ENCODE measurements at regions of chr1 and their contacts with region 1.

Region 1: DNA sequence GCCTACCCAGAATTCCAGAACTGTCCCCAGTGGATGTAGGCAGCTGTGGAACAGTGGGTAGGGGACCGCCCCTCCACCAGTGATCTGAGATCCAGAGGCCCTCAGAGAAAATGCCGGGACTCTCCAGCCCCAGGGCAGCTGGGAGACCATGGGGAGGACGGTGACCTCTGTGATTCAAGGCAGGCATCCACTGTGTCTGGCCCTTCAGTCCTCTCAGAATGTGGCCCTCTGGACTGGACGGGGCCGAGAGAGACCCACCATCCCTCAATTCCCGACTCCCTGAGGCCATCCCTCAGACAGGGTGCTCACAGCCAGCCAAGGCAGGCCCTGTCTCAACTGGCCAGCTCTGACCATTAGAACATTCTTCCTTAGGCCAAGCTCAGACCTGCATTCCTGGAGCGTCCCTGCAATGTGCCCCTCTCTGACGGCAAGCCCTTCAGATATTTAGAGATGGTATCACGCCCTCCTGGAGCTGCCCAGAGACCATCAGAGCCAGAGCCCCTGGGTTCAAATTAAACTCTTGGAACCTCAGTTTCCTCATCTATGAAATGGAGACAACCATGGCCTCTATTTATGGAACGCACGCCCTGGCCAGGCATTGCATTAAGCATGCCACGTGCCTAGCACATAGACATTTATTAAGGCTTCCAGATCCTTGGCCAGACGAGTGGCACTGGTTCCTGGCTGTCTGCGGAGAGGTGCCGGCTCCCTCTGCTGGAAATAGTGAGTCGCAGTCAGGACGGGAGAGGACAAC is 9.6 kb upstream of the EPS8L3 start:
- DNase-seq: peak; percentile 82 to 89 (median 83)
- ATAC-seq: peak; percentile 72 to 88 (median 86)
- H3K4me3 ChIP-seq: no peak overlapping the region
- H3K27ac ChIP-seq: no peak overlapping the region
- H3K4me1 ChIP-seq: peaks cover 0 to 16% (median 8%) of the 10 kb centered on the region in 12 donors
- H3K27me3 ChIP-seq: no peaks in the 10 kb centered on the region
- CTCF ChIP-seq: peak; percentile 78 to 90 (median 86)
- POLR2A ChIP-seq: no peak

Region 2: GRCh38 chr1:109548321-109549267 is 224.7 kb before region 1 on chr1 and contains the start of gene GNAI3:
- intact Hi-C with region 1: loop called (anchors 1 to 5 kb)
- DNase-seq: peak; percentile 95 to 97 (median 97)
- ATAC-seq: peak; percentile 98 to 99 (median 98)
- H3K4me3 ChIP-seq: peak within 1 kb of the TSS; percentile 61 to 98 (median 90)
- H3K27ac ChIP-seq: peak within 1 kb of the TSS; percentile 85 to 99 (median 94)
- H3K4me1 ChIP-seq: peaks cover 0 to 51% (median 34%) of the 10 kb centered on the region in 12 donors
- H3K27me3 ChIP-seq: no peaks in the 10 kb centered on the region
- CTCF ChIP-seq: no peak
- POLR2A ChIP-seq: peak; percentile 71 to 97
- total RNA-seq, gene GNAI3: 1.5 to 5.4 (median 2.5) TPM

Region 3: GRCh38 chr1:109643385-109644230 is 129.7 kb before region 1 on chr1:
- intact Hi-C with region 1: loop called (anchors 1 to 5 kb)
- DNase-seq: peak; percentile 78 to 93 (median 85)
- ATAC-seq: peak; percentile 84 to 93 (median 88)
- H3K4me3 ChIP-seq: no peak overlapping the region
- H3K27ac ChIP-seq: peak overlapping the region in 1 of 12 donors; percentile 25
- H3K4me1 ChIP-seq: peaks cover 0 to 12% (median 7%) of the 10 kb centered on the region in 12 donors
- H3K27me3 ChIP-seq: no peaks in the 10 kb centered on the region
- CTCF ChIP-seq: peak; percentile 75 to 92 (median 84)
- POLR2A ChIP-seq: no peak

Region 4: DNA sequence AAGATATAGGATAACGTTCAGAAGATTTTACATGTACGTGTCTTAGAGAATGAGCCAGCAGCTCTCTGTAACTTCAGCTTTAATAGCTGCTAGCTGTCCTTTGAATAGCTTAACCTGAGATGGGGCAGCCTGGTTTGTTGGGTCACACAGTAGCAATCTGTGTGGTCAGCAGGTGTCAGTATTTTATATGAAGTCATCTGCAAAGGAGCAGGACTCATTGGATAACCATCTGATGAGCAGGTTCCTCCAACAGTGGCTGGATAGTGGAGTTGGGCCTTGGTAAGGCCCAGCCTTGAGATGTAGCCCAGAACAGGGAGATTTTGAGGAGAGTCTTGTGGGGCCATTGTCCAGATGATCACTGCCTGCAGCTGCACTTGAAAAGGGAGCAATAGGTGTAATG is 54.8 kb before region 1 on chr1:
- intact Hi-C with region 1: loop called in 9 of 10 experiments (anchors 1 to 5 kb)
- DNase-seq: no peak
- ATAC-seq: peak in 3 of 4 donors; percentile 64 to 69 (median 67)
- H3K4me3 ChIP-seq: no peak overlapping the region
- H3K27ac ChIP-seq: no peak overlapping the region
- H3K4me1 ChIP-seq: peaks cover 0 to 8% (median 0%) of the 10 kb centered on the region in 12 donors
- H3K27me3 ChIP-seq: no peaks in the 10 kb centered on the region
- CTCF ChIP-seq: peak in 9 of 12 donors; percentile 4 to 43 (median 36)
- POLR2A ChIP-seq: no peak

Region 5: DNA sequence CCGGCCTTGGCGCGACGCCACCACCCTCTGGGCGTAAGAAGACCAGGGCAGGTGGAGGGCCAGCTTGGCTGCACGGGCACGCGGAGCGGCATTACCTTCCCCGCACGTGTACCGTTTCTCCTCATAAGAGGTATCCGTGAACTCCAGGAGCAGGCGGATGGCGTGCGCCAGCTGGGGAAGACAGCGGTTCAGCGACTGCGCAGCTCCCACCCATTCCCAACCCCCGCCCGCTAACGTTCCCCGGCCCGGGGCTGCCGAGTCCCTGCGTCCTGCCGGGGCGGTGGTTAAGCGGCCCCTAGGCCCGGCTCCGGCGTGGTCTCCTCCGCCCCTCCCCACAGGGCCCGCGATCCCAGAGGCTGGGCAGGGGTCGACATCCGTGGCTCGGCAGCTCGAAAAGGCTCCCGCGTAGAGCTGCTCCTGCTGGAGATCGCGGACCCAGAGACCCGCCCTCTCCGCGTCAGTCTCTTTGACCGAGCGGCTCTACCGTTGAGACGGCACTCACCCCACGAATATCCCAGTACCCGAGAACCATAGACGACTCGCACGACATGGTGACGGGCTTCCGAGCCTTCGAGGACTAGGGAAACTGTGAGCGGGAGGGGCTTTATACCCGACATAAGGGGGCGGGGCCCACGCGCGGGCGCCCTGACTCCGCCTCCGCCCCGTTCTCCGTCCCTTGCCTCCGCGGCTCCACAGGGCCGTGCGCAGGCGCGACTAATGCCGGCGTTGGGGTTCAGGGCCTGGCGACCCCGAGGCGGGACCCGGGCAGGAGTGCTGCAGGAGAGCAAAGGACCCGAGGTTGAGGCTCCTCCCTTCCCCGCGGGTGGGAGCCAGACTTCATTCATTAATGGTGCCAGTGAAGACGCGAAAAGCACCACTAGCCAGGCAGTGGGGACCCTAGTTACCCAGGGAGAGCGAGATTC is 33.3 kb before region 1 on chr1:
- intact Hi-C with region 1: loop called in 1 of 10 experiments (anchors 5 kb)
- DNase-seq: peak; percentile 77 to 92 (median 80)
- ATAC-seq: peak; percentile 94 to 99 (median 98)
- H3K4me3 ChIP-seq: peak overlapping the region; percentile 28 to 88 (median 66)
- H3K27ac ChIP-seq: peak overlapping the region in 11 of 12 donors; percentile 5 to 84 (median 64)
- H3K4me1 ChIP-seq: peaks cover 0 to 17% (median 12%) of the 10 kb centered on the region in 12 donors
- H3K27me3 ChIP-seq: peaks cover 0 to 10% (median 0%) of the 10 kb centered on the region in 9 donors
- CTCF ChIP-seq: no peak
- POLR2A ChIP-seq: peak; percentile 59 to 83

Region 6: DNA sequence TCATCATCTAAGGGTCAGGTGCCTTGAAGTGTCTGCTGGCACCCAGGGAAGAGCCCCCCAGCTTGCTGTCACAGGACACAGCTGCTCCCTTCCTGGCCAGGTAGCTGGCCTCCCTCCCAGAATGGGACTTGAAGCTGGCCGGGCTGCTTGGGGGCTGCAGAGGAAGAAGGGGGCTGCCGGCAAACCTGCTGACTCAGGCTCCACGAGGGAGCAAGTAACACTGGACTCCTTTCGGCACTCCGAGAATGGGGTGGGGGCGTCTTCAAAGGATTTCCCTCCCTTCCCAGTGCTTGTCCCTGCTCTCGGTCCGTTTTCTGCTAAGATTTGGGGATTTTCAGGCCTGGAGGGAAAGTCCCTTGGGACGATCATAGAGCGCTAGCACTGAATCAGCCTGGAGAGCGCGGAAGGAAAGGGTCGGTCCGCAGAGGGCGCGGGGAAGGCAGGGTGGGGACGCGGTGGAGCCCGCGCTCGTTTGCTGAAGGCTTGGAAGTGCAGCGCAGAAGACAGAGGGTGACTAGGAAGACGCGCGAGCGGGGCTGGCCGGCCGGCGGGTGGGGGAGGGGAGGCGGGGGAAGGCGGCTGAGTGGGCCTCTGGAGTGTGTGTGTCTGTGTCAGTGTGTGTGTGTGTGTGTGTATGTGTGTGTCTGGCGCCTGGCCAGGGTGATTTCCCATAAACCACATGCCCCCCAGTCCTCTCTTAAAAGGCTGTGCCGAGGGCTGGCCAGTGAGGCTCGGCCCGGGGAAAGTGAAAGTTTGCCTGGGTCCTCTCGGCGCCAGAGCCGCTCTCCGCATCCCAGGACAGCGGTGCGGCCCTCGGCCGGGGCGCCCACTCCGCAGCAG is 137.0 kb after region 1 on chr1 and contains the start of gene CSF1:
- intact Hi-C with region 1: loop called in 2 of 10 experiments (anchors 5 kb)
- DNase-seq: peak; percentile 82 to 88 (median 86)
- ATAC-seq: peak; percentile 66 to 84 (median 74)
- H3K4me3 ChIP-seq: peak within 1 kb of the TSS; percentile 71 to 97 (median 88)
- H3K27ac ChIP-seq: peak within 1 kb of the TSS; percentile 59 to 93 (median 88)
- H3K4me1 ChIP-seq: peaks cover 4 to 66% (median 47%) of the 10 kb centered on the region in 12 donors
- H3K27me3 ChIP-seq: peaks cover 0 to 9% (median 0%) of the 10 kb centered on the region in 9 donors
- CTCF ChIP-seq: peak in 1 of 12 donors; percentile 21
- POLR2A ChIP-seq: peak in 1 of 2 donors; percentile 57
- total RNA-seq, gene CSF1: 9.0 to 64.8 (median 14.5) TPM

Region 7: DNA sequence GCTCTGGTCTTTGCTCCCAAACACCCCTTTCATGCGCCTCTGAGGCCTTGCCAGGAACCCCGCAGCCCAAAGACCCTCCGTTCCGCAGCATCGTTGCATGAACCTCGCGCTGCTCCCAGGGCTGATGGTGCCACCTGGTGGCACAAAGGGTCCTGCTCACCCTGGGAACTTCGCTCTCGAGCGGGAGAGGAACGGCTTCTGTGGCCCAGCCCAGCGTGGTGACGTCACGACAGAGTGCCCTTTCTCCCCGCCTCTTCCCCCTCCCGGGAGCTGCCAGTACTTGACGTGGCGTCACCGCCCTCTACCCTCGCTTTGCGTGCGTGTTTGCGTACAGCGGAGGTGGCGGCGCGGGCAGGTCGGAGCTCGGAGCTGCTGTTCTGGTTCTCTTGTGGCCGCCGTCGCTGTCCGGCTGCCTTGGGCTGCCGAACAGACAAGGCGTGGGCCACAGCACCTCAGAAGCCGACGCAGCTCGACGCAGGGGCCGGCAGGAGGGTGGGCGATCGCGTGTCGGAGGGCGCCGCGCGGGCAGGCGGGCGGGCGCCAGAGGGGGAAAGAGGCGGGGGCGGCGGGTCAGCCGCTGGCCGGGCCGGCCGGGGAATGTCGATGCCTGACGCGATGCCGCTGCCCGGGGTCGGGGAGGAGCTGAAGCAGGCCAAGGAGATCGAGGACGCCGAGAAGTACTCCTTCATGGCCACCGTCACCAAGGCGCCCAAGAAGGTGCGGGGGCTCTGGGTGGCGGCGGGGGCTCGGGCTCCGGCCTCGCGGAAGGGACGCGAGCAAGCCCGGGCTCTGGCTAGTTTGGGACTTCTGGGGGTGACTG is 211.3 kb after region 1 on chr1 and contains the start of gene AHCYL1:
- intact Hi-C with region 1: loop called (anchors 1 kb)
- DNase-seq: peak; percentile 100
- ATAC-seq: peak; percentile 96 to 98 (median 98)
- H3K4me3 ChIP-seq: peak within 1 kb of the TSS; percentile 61 to 97 (median 93)
- H3K27ac ChIP-seq: peak within 1 kb of the TSS; percentile 90 to 99 (median 98)
- H3K4me1 ChIP-seq: peaks cover 9 to 64% (median 55%) of the 10 kb centered on the region in 12 donors
- H3K27me3 ChIP-seq: no peaks in the 10 kb centered on the region
- CTCF ChIP-seq: peak; percentile 96 to 100 (median 98)
- POLR2A ChIP-seq: peak; percentile 95 to 98
- total RNA-seq, gene AHCYL1: 31.1 to 56.7 (median 48.7) TPM